Naive thymus-derived CD8-positive, alpha-beta T cell (primary cell): ENCODE measurements at regions of chr2 and their contacts with region 1.

Region 1: DNA sequence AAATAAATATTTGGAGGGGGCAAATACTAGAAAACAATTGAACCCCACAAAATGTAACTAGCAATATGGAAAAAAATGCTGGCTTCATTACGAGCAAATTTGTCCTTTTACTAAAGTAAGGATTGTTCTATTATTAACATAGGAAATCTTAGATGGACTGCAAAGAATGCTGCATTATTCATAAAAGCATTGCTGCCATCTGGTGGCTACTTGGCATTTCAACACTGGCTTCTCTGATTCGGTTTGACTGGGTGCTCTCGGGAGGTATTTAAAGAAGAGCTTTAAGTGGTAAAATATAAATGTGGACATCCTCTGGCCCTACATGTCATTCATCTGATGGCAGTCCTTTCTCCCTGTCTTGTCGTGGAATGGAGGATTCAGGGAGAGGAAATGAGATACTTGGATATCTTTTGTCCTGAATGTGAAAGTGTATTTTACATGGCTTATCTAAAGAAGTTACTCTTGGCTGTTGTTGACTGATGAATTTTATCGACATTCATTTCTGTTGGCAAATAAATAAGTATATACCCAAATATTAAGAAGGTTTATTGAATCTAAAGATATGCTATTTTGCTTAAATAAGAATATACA is 130.2 kb downstream of the ARHGAP15 start:
- DNase-seq: peak; percentile 34 to 85 (median 67)
- ATAC-seq: peak; percentile 51 to 57
- H3K4me3 Mint-ChIP-seq: peak overlapping the region; percentile 53 to 87 (median 75)
- H3K27ac Mint-ChIP-seq: peak overlapping the region in 9 of 10 donors; percentile 15 to 94 (median 87)
- H3K4me1 Mint-ChIP-seq: peaks cover 27 to 86% (median 71%) of the 10 kb centered on the region in 4 donors
- H3K27me3 Mint-ChIP-seq: no peaks in the 10 kb centered on the region

Region 2: GRCh38 chr2:143110758-143111428 is 148.6 kb before region 1 on chr2:
- POLR2A ChIA-PET with region 1: interaction called, 14 read pairs
- DNase-seq: peak; percentile 25 to 78 (median 63)
- ATAC-seq: peak; percentile 87 to 94
- H3K4me3 Mint-ChIP-seq: peak overlapping the region in 6 of 10 donors; percentile 1 to 59 (median 26)
- H3K27ac Mint-ChIP-seq: peak overlapping the region; percentile 14 to 83 (median 44)
- H3K4me1 Mint-ChIP-seq: peaks cover 11 to 34% (median 22%) of the 10 kb centered on the region in 4 donors
- H3K27me3 Mint-ChIP-seq: peaks cover 0 to 1% (median 0%) of the 10 kb centered on the region in 5 donors

Region 3: GRCh38 chr2:143162123-143162837 is 97.2 kb before region 1 on chr2:
- POLR2A ChIA-PET with region 1: interaction called, 24 read pairs
- DNase-seq: peak; percentile 22 to 78 (median 58)
- ATAC-seq: peak; percentile 95 to 99
- H3K4me3 Mint-ChIP-seq: peak overlapping the region in 1 of 10 donors; percentile 34
- H3K27ac Mint-ChIP-seq: peak overlapping the region; percentile 49 to 93 (median 82)
- H3K4me1 Mint-ChIP-seq: peaks cover 34 to 90% (median 86%) of the 10 kb centered on the region in 4 donors
- H3K27me3 Mint-ChIP-seq: no peaks in the 10 kb centered on the region